Spleen (tissue), 13 donors: ENCODE measurements at regions of chr7 and their contacts with region 1.

Region 1: DNA sequence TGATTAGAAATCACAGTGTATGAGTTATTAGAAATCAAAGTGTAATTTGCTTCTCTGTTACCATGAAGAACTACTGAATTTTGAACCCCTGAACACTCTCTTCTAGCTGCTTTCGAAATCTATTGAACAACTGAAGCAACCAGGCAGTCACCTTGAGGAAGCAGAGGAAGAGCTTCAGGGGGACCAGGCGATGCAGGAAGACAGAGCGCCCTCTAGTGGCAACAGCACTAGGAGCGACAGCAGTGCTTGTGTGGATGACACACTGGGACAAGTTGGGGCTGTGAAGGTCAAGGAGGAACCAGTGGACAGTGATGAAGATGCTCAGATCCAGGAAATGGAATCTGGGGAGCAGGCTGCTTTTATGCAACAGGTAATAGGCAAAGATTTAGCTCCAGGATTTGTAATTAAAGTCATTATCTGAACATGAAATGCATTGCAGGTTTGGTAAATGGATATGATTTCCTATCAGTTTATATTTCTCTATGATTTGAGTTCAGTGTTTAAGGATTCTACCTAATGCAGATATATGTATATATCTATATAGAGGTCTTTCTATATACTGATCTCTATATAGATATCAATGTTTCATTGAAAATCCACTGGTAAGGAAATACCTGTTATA is 170.7 kb downstream of the HDAC9 start:
- DNase-seq: peak; percentile 92
- H3K4me3 ChIP-seq: no peak overlapping the region
- H3K27ac ChIP-seq: no peak overlapping the region
- H3K4me1 ChIP-seq: peaks cover 0 to 28% (median 11%) of the 10 kb centered on the region in 6 donors
- H3K27me3 ChIP-seq: no peaks in the 10 kb centered on the region
- CTCF ChIP-seq: peak; percentile 45 to 87 (median 78)
- POLR2A ChIP-seq: no peak

Region 2: GRCh38 chr7:18076461-18076860 is 589.8 kb before region 1 on chr7:
- intact Hi-C with region 1: no loop called
- DNase-seq: no peak
- H3K4me3 ChIP-seq: no peak overlapping the region
- H3K27ac ChIP-seq: no peak overlapping the region
- H3K4me1 ChIP-seq: no peaks in the 10 kb centered on the region
- H3K27me3 ChIP-seq: no peaks in the 10 kb centered on the region
- CTCF ChIP-seq: no peak
- POLR2A ChIP-seq: no peak

Region 3: DNA sequence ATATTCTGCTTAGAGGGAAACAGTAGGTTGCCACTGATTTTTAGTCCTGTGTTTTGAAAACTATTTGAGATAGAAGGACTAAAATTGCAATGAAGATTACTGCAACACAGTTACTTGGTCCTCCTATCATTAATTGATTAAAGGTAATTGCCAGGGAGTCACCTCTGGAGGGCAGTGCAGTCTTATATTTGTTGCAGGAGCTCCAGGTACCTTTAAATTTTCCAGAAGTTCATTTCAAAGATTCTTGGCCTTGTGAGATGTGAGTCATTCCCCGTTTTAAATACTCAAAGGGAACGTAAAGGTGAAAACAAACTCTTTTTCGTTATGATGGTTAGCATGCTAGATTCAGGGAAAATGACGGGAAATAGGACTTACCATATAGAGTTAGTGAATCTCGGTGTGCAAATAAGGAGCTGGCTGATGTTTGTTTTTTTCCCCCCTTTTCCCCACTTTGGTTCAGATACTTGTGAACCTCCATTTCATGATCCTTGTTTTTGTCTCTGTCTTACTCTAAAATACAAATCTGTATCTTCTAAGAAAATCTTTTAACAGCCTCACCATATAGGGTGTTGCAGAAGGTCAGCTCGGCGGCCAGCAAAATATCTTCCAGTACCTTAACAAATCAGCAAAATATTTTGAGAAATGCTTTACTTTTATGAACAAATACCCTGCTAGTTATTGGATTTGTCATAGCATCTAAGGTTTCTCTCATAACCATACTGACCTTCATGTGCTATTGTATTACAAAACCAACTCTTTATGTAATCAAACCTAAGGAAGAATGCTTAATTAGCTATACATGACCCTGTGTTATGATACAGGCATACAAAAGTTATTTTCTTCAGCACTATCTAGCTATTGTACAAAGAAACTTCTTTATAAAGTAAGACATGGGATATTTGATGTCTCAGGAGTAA is 313.6 kb before region 1 on chr7:
- intact Hi-C with region 1: loop called (anchors 10 kb)
- DNase-seq: no peak
- H3K4me3 ChIP-seq: no peak overlapping the region
- H3K27ac ChIP-seq: no peak overlapping the region
- H3K4me1 ChIP-seq: peaks cover 5 to 58% (median 20%) of the 10 kb centered on the region in 6 donors
- H3K27me3 ChIP-seq: no peaks in the 10 kb centered on the region
- CTCF ChIP-seq: peak; percentile 15 to 65 (median 50)
- POLR2A ChIP-seq: no peak

Region 4: DNA sequence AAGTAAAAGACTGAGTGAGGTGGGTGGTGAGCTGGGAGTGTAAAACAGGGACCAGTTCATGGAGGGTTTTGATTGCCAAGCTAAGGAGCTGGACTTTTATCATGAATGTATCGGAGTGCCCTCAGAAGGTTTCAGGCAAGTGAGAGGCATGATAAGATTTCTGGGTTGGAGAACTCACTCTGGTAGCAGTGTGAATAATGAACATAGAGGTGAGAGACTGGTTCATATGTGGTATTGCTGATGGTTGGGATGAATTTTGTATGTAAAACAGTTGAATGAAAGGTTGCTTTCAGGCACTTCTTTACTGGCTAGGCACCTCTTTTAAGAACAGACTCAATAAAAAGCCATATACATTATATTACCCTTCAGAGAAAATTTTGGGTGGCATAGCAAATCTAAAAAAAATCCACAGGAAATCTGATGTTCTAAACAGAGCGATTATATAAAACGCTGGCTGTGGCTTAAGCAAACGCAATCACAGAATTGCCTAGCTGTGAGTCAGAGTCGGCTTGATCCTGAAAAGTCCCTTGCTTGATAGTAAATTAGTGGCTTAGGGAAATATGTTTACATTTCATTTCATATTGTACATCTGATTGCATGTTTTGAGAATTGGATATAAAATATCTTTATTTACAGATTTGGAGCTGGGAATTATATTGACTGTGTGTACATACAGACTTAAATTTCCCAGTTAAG is 263.6 kb before region 1 on chr7:
- intact Hi-C with region 1: no loop called
- DNase-seq: no peak
- H3K4me3 ChIP-seq: no peak overlapping the region
- H3K27ac ChIP-seq: peak overlapping the region in 2 of 8 donors; percentile 15 to 33
- H3K4me1 ChIP-seq: peaks cover 3 to 39% (median 14%) of the 10 kb centered on the region in 6 donors
- H3K27me3 ChIP-seq: no peaks in the 10 kb centered on the region
- CTCF ChIP-seq: no peak
- POLR2A ChIP-seq: no peak

Region 5: GRCh38 chr7:18530224-18531179 is 135.7 kb before region 1 on chr7:
- intact Hi-C with region 1: no loop called
- DNase-seq: no peak
- H3K4me3 ChIP-seq: peak overlapping the region in 1 of 8 donors; percentile 14
- H3K27ac ChIP-seq: peak overlapping the region in 7 of 8 donors; percentile 44 to 56 (median 53)
- H3K4me1 ChIP-seq: peaks cover 0 to 85% (median 16%) of the 10 kb centered on the region in 6 donors
- H3K27me3 ChIP-seq: no peaks in the 10 kb centered on the region
- CTCF ChIP-seq: no peak
- POLR2A ChIP-seq: no peak

Region 6: DNA sequence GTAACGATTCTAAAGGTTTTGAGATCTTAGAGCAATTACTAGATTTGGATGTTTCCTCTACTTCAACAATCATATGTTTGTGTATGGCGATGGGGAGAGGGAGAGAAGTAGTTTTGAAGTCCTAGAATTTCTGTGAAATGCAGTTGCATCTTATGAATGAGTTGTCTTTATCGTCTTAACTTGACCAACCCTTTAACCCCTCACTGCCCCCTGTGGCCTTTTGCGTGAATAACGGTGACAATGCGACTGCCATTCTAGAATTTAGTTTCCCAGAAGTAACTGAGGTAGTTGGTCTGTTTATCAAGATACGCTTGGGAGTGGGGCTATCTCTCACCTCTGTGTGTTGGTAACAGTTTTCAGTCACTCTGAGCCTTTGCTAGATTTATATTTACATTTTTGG is 33.9 kb after region 1 on chr7:
- intact Hi-C with region 1: no loop called
- DNase-seq: no peak
- H3K4me3 ChIP-seq: no peak overlapping the region
- H3K27ac ChIP-seq: no peak overlapping the region
- H3K4me1 ChIP-seq: no peaks in the 10 kb centered on the region
- H3K27me3 ChIP-seq: no peaks in the 10 kb centered on the region
- CTCF ChIP-seq: no peak
- POLR2A ChIP-seq: no peak